ENCODE measurements at regions of chr9 and their contacts with region 1.

Region 1: DNA sequence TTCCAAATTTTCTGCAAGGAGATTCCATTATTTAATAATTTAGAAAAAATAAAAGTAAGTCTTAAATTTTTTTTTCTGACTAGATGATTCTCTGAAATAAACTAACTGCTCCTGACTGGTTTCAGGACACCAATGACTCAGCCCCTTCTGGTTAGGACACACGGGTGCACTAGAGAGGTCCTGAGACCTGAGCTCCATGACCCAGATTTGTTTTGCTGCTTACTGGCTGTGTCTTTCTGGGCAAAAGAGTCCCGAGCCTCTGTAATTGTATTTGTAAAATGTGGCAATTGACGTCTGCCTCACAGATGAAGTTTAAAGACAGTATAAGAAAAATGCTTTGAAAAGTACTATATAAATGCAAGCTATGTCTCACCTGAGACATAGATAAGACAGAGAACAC is 89.1 kb downstream of the SLC24A2 start:
- DNase-seq: no peak
- H3K4me3 ChIP-seq: no peak overlapping the region
- H3K27ac ChIP-seq: peak overlapping the region; percentile 59 to 99 (median 93)
- H3K27me3 ChIP-seq: no peaks in the 10 kb centered on the region
- CTCF ChIP-seq: no peak

Region 2: GRCh38 chr9:19629488-19629887 is 70.3 kb before region 1 on chr9:
- intact Hi-C with region 1: loop called in 1 of 2 experiments (anchors 2 kb)
- DNase-seq: no peak
- H3K4me3 ChIP-seq: no peak overlapping the region
- H3K27ac ChIP-seq: peak overlapping the region in 51 of 59 donors; percentile 1 to 100 (median 62)
- H3K27me3 ChIP-seq: no peaks in the 10 kb centered on the region
- CTCF ChIP-seq: peak in 6 of 56 donors; percentile 9 to 30 (median 13)

Region 3: GRCh38 chr9:19641046-19641445 is 58.7 kb before region 1 on chr9:
- intact Hi-C with region 1: loop called in 1 of 2 experiments (anchors 2 kb)
- DNase-seq: no peak
- H3K4me3 ChIP-seq: no peak overlapping the region
- H3K27ac ChIP-seq: peak overlapping the region in 58 of 59 donors; percentile 51 to 96 (median 86)
- H3K27me3 ChIP-seq: no peaks in the 10 kb centered on the region
- CTCF ChIP-seq: peak in 52 of 56 donors; percentile 11 to 72 (median 43)

Region 4: GRCh38 chr9:19788614-19789271 is 89.0 kb after region 1 on chr9 and contains the start of gene SLC24A2:
- intact Hi-C with region 1: loop called in 1 of 2 experiments (anchors 5 kb)
- DNase-seq: peak; percentile 28 to 86 (median 70)
- H3K4me3 ChIP-seq: peak within 1 kb of the TSS; percentile 53 to 89 (median 77)
- H3K27ac ChIP-seq: peak within 1 kb of the TSS; percentile 60 to 98 (median 95)
- H3K27me3 ChIP-seq: peaks cover 0 to 12% (median 0%) of the 10 kb centered on the region in 45 donors
- CTCF ChIP-seq: peak in 10 of 56 donors; percentile 5 to 41 (median 13)
- total RNA-seq, gene SLC24A2: 72.9 to 391 (median 239) TPM

Region 5: GRCh38 chr9:20028849-20029231 is 329.1 kb after region 1 on chr9:
- intact Hi-C with region 1: no loop called
- DNase-seq: no peak
- H3K4me3 ChIP-seq: no peak overlapping the region
- H3K27ac ChIP-seq: no peak overlapping the region
- H3K27me3 ChIP-seq: no peaks in the 10 kb centered on the region
- CTCF ChIP-seq: no peak

Measured in dorsolateral prefrontal cortex (tissue), 120 donors.